Activated T-helper 2 cell treated with anti-CD3 and anti-CD28 coated beads, Interferon-gamma antibody, Interleukin-2, Interleukin-4, amounts not matched to agents 10 μg/mL and 5 μg/mL and 100 μg/mL, durations not matched to agents 14 hours and 24 hours and 36 hours (primary cell): ENCODE measurements at regions of chr2 and their contacts with region 1.

Region 1: GRCh38 chr2:38552259-38552658 is 50.5 kb downstream of the HNRNPLL start:
- DNase-seq: no peak
- H3K4me3 Mint-ChIP-seq: no peak overlapping the region
- H3K27ac Mint-ChIP-seq: peak overlapping the region; percentile 67
- H3K4me1 Mint-ChIP-seq: peaks cover 35% of the 10 kb centered on the region
- H3K27me3 Mint-ChIP-seq: no peaks in the 10 kb centered on the region

Region 2: DNA sequence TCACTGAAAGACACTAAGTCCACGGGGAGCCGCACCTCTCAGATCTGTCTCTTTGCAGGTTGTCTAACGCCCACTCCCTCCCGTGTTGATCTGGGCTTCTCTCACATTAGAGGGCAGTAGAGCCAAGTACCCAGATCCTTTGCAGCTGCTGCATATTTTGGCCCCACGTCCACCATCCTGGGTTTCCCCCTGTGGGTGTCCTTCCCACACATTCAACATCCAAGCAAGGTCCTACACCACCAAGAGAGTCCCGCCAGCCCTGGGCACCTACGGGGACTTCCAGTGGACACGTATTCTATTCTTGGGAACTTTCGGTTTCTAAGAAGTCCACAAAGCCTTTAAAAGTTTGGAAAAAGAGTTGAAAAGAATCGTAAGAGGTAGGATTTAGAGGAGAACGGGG is 291.8 kb before region 1 on chr2:
- intact Hi-C with region 1: no loop called
- DNase-seq: no peak
- H3K4me3 Mint-ChIP-seq: no peak overlapping the region
- H3K27ac Mint-ChIP-seq: no peak overlapping the region
- H3K4me1 Mint-ChIP-seq: peaks cover 32% of the 10 kb centered on the region
- H3K27me3 Mint-ChIP-seq: peaks cover 19% of the 10 kb centered on the region

Region 3: GRCh38 chr2:38571193-38571592 is 18.9 kb after region 1 on chr2:
- intact Hi-C with region 1: loop called (anchors 2 kb)
- DNase-seq: no peak
- H3K4me3 Mint-ChIP-seq: no peak overlapping the region
- H3K27ac Mint-ChIP-seq: no peak overlapping the region
- H3K4me1 Mint-ChIP-seq: peaks cover 44% of the 10 kb centered on the region
- H3K27me3 Mint-ChIP-seq: no peaks in the 10 kb centered on the region

Region 4: DNA sequence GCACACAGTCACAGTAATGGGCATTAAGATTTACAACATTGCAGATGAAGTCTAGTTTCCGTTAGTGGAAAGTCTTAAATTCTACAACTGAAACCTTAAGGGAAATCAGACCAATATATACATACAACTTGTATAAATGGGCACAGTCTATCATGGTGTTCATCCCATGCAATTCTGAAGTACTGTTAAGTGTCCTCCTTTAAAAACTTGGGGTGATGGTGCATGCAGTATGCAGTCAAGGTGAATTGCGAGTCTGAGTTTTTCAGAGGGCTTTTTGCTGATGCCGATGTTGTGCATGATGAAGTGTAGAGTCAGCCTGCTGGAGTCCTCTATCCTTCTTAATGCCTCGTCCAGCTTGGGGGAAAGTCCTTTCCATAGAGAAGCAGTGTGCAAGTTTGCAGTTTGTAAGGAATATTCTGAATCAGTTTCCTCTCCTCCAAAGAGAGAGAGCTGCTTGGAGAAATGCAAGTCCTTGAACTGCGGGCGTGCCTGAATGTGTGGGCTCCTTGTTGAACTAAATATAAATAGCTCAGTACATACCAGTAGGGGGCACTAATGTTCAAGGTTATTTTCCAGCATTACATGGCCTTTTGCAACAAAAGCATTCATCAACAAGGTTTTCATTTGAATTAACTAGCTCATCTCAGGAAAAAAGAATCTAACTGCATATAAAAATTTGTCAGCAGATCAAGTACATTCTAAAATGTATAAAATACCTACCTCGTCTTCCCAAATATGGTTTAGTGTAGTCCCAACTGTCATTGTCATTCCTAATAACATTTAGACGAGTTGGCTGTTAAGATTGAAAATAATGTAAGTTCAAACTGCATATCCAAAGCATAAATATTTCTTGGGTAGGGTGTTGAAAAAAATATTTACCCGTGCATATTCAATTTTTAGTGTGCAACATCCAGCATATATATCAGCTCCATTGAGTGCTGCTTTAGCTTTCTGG is 29.2 kb after region 1 on chr2:
- intact Hi-C with region 1: no loop called
- DNase-seq: no peak
- H3K4me3 Mint-ChIP-seq: no peak overlapping the region
- H3K27ac Mint-ChIP-seq: peak overlapping the region; percentile 15
- H3K4me1 Mint-ChIP-seq: peaks cover 39% of the 10 kb centered on the region
- H3K27me3 Mint-ChIP-seq: no peaks in the 10 kb centered on the region

Region 5: DNA sequence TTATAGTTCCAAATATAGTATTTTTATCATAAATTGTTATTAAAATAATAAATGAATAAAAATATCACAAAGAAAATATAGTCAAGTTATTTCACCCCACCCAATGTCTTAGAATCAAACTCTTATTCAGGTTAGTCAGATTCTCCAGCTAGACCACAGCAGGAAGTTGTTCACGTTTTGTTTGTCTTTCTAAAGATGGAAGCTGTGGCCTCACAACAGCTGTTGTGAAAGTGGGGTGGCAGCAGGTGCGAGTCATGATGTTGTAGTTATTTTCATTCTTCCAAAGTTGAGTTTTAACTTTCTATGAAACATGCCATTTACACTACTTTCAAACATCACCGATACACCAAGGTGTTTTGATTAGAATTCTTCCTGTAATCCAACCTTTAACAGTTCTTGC is 1626.7 kb after region 1 on chr2:
- intact Hi-C with region 1: no loop called
- DNase-seq: no peak
- H3K4me3 Mint-ChIP-seq: no peak overlapping the region
- H3K27ac Mint-ChIP-seq: no peak overlapping the region
- H3K4me1 Mint-ChIP-seq: peaks cover 12% of the 10 kb centered on the region
- H3K27me3 Mint-ChIP-seq: no peaks in the 10 kb centered on the region